ENCODE measurements at regions of chr2 and their contacts with region 1.

Region 1: DNA sequence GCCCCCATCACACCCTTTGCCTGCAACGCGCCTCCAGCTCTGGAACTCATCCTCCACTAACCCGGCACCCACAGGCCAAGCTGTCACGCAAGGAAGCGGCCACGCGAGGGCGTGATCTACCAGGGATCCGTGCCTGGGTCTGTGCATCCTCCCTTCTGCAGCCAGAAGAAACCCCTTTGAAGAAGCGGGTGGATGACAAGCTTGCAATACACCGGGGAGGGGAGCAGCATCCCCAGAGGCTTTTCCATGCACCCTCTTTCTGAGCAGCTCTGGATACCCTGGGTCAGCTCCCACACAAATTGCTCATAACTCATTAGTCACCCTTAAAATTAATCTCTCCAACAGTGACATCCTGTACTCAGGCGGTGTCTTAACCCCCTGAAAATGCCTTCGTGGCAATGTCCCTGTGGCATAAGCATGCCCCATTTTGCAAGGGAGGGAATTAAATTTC is 47.6 kb downstream of the PDCL3 start:
- DNase-seq: no peak
- ATAC-seq: peak; percentile 93
- H3K4me3 ChIP-seq: no peak overlapping the region
- H3K27ac ChIP-seq: no peak overlapping the region
- H3K4me1 ChIP-seq: no peaks in the 10 kb centered on the region
- H3K27me3 ChIP-seq: no peaks in the 10 kb centered on the region; a peak in 1 of 4 replicates
- CTCF ChIP-seq: peak; percentile 63 to 70 (median 69)
- EP300 ChIP-seq: no peak
- POLR2A ChIP-seq: no peak
- RAD21 ChIP-seq: peak; percentile 79

Region 2: GRCh38 chr2:100655936-100656534 is 45.6 kb after region 1 on chr2:
- CTCF ChIA-PET with region 1: no interaction called
- POLR2A ChIA-PET with region 1: no interaction called
- RAD21 ChIA-PET with region 1: no interaction called
- SMC1A ChIA-PET with region 1: no interaction called
- in situ Hi-C with region 1: no loop called
- intact Hi-C with region 1: no loop called
- DNase-seq: no peak
- ATAC-seq: no peak
- H3K4me3 ChIP-seq: no peak overlapping the region
- H3K27ac ChIP-seq: no peak overlapping the region
- H3K4me1 ChIP-seq: no peaks in the 10 kb centered on the region
- H3K27me3 ChIP-seq: peaks cover 0 to 3% of the 10 kb centered on the region in 2 experiments; a peak in 1 of 4 replicates
- CTCF ChIP-seq: no peak
- EP300 ChIP-seq: no peak
- POLR2A ChIP-seq: no peak
- RAD21 ChIP-seq: no peak

Region 3: GRCh38 chr2:101151141-101151858 is 540.9 kb after region 1 on chr2 and contains the start of gene TBC1D8:
- CTCF ChIA-PET with region 1: no interaction called
- POLR2A ChIA-PET with region 1: no interaction called
- RAD21 ChIA-PET with region 1: interaction called, 3 read pairs
- SMC1A ChIA-PET with region 1: no interaction called
- in situ Hi-C with region 1: loop called (anchors 10 kb)
- intact Hi-C with region 1: loop called (anchors 5 kb)
- DNase-seq: no peak
- ATAC-seq: peak; percentile 84
- H3K4me3 ChIP-seq: peak within 1 kb of the TSS; percentile 61
- H3K27ac ChIP-seq: no peak within 1 kb of the TSS
- H3K4me1 ChIP-seq: peaks cover 10% of the 10 kb centered on the region
- H3K27me3 ChIP-seq: peaks cover 0 to 3% of the 10 kb centered on the region in 2 experiments; a peak in 2 of 4 replicates
- CTCF ChIP-seq: no peak
- EP300 ChIP-seq: no peak
- POLR2A ChIP-seq: peak; percentile 73
- RAD21 ChIP-seq: no peak
- polyA plus RNA-seq, gene TBC1D8: 0.80 to 1.5 TPM